ENCODE measurements at regions of chr6 and their contacts with region 1.

Region 1: DNA sequence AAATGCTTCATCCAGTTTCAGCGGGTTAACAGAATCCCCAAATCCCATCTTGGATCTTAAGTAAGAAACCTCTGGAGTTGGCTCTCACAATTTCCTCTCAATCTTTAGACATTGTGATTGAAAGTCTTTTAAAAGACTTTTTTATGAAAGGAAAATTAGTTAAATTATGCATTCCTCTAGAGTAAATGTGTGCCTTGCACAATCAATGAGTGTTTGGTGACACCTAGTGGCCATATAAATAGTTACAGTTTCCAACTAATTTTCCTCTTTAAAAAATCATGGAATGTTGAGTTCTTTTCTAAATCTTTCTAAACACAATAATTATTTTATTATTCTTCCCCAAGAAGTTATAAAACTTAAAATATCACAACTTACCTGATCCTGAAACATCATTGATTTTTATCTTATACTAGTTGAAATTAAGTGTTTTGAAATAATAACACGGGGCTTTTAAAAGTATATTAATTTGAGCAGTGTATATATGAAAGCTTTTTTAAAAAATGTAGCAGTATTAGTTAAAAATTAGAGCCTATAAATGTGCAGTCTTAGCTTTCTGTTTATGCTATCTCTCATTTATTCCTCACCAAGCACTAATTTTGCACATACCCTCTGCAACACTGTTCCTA is 66.4 kb downstream of the PKHD1 start:
- DNase-seq: no peak
- ATAC-seq: no peak
- H3K4me3 ChIP-seq: no peak overlapping the region
- H3K27ac ChIP-seq: no peak overlapping the region
- H3K4me1 ChIP-seq: no peaks in the 10 kb centered on the region
- H3K27me3 ChIP-seq: no peaks in the 10 kb centered on the region; the same call in none of the 2 replicates
- CTCF ChIP-seq: peak; percentile 59; the same call in 1 of the 2 replicates

Region 2: DNA sequence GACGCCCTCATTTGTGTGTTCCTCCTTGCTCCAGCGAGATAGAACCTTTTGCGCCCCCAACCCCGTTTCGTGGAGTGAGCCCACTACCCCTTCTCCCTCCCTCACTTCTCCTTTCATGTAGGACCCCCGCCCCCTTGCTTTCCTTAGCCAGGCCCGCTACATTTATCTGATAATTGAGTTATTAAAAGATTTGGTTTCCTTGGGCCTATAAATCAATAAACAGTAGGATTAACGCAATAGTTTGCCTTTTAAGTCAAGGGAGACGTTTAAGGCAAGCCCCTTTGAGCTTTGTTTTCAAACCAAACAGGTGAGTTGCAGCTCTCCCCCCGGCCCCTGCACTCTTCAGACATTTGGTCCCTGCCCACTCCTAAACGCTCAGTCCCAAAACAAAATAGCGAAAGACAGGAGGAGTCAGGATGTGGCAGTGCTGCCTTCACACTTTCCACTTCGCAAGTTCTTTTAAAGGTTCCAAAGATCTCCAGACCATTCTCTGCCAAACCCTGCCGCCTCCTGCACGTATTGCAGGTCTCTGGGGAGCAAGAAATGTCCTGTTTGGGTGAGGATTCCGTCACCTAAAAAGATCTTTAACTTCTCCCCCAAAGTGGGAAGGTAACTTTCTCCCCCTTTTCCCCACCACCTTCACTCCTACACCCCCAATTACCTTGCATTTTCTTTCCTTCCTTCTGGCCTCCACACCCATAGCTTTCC is 1174.8 kb before region 1 on chr6:
- CTCF ChIA-PET with region 1: no interaction called
- POLR2A ChIA-PET with region 1: interaction called, 11 read pairs
- in situ Hi-C with region 1: no loop called
- intact Hi-C with region 1: no loop called
- DNase-seq: no peak
- ATAC-seq: no peak
- H3K4me3 ChIP-seq: no peak overlapping the region
- H3K27ac ChIP-seq: no peak overlapping the region
- H3K4me1 ChIP-seq: no peaks in the 10 kb centered on the region
- H3K27me3 ChIP-seq: peaks cover 3% of the 10 kb centered on the region; the same call in 1 of the 2 replicates
- CTCF ChIP-seq: no peak

Region 3: DNA sequence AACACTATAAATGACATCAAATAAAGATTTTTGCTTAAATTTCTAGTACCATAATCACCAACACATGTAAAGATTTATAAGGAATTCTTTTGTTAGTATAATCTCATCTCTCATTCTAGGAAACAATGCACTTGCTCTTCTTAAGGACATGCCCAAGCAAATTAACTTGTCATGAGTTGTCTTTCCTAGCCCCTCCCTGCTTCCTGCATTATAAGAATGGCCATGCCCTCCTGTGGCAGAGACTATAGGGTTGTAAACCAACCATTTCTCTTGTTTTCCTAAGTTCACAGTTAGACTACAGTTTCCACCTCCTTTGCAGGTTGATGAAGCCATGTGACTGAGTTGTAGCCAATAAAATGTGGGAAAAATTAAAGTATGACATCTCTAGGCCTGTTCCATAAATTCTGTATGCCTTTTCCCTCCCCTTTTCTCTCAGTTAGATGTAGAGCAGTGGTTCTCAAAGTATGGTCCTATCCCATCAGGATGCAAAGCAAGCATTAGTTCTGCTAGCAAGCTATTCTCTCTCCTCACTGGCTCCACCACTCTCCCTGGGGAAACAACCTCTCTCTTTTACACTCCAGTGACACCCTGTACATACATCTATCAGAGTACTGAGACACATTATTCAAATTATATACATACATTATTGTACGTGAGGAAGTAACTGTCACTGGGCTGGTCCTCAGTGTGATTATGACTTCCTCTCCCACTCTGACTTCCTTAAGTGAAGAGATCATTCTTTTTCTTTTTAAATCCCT is 228.6 kb before region 1 on chr6:
- CTCF ChIA-PET with region 1: no interaction called
- POLR2A ChIA-PET with region 1: no interaction called
- in situ Hi-C with region 1: no loop called
- intact Hi-C with region 1: no loop called
- DNase-seq: no peak
- ATAC-seq: no peak
- H3K4me3 ChIP-seq: no peak overlapping the region
- H3K27ac ChIP-seq: no peak overlapping the region
- H3K4me1 ChIP-seq: no peaks in the 10 kb centered on the region
- H3K27me3 ChIP-seq: no peaks in the 10 kb centered on the region
- CTCF ChIP-seq: no peak

Region 4: DNA sequence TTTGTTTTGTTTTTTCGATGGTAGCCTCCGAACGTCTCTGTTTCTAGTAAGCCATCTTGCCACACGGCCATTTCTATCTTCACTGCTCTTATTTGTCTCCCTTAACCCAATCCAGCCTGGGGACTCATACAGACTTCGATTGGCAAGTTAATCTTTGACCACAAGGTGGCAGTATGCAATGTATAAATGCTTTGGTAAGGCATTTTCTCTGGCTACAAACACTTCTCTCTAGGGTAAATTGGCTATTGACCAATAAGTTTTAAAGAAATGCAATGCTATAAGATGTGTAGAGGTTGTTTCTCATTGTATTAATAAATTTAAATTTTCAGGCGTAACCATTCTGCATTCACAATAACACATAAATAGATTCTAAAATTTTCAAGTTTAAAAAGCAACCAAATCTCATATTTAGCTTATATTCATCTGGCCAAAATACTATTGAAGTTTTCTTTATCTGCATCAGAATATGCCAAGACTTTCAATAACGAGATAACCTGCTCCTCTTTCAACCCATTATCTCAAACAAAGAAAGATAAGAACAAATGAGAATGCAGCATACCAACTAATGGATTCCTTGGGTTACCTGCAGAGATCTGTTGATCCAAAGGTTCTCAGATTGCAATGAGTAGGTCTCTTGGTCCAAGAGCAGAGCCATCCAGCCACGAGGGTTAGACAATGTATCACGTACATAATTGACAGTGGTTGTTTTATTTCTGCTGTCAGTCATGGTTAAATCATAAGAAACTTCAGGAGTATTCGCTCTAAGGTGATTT is 165.6 kb before region 1 on chr6:
- CTCF ChIA-PET with region 1: no interaction called
- POLR2A ChIA-PET with region 1: no interaction called
- in situ Hi-C with region 1: no loop called
- intact Hi-C with region 1: loop called (anchors 2 kb)
- DNase-seq: peak; percentile 20
- ATAC-seq: peak; percentile 74
- H3K4me3 ChIP-seq: no peak overlapping the region
- H3K27ac ChIP-seq: no peak overlapping the region
- H3K4me1 ChIP-seq: no peaks in the 10 kb centered on the region
- H3K27me3 ChIP-seq: no peaks in the 10 kb centered on the region
- CTCF ChIP-seq: peak; percentile 77